Activated T-helper 1 cell treated with anti-CD3 and anti-CD28 coated beads, Interleukin-12 subunit alpha, Interleukin-12 subunit beta, Interleukin-2, Interleukin-4 antibody, amounts not matched to agents 30 ng/mL and 10 ng/mL and 1 ng/mL, durations not matched to agents 14 hours and 24 hours and 36 hours (primary cell): ENCODE measurements at regions of chr18 and their contacts with region 1.

Region 1: GRCh38 chr18:5237723-5238370 is 40.8 kb upstream of the AKAIN1 start:
- DNase-seq: peak; percentile 87
- H3K4me3 Mint-ChIP-seq: peak overlapping the region; percentile 97
- H3K27ac Mint-ChIP-seq: peak overlapping the region; percentile 98
- H3K4me1 Mint-ChIP-seq: peaks cover 47% of the 10 kb centered on the region
- H3K27me3 Mint-ChIP-seq: peaks cover 8% of the 10 kb centered on the region

Region 2: DNA sequence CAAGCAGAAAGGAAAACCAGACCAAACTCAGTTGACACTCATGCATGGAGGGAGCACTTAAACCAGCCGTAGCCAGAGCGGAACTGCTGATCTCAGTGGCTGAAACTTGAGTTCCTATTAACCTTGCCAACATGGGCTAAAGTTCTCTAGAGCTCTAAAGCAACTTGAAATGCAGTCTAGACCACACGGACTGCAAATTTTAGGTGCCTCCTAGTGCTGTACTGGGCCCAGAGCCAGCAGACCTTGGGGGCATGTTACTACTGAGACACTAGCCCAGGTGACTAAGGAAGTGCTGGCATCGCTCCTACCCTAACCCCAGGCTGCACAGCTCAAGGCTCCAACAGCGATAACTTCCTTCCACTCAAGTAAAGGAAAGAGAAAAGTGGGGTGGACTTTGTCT is 277.3 kb before region 1 on chr18:
- intact Hi-C with region 1: no loop called
- DNase-seq: no peak
- H3K4me3 Mint-ChIP-seq: no peak overlapping the region
- H3K27ac Mint-ChIP-seq: no peak overlapping the region
- H3K4me1 Mint-ChIP-seq: no peaks in the 10 kb centered on the region
- H3K27me3 Mint-ChIP-seq: no peaks in the 10 kb centered on the region

Region 3: DNA sequence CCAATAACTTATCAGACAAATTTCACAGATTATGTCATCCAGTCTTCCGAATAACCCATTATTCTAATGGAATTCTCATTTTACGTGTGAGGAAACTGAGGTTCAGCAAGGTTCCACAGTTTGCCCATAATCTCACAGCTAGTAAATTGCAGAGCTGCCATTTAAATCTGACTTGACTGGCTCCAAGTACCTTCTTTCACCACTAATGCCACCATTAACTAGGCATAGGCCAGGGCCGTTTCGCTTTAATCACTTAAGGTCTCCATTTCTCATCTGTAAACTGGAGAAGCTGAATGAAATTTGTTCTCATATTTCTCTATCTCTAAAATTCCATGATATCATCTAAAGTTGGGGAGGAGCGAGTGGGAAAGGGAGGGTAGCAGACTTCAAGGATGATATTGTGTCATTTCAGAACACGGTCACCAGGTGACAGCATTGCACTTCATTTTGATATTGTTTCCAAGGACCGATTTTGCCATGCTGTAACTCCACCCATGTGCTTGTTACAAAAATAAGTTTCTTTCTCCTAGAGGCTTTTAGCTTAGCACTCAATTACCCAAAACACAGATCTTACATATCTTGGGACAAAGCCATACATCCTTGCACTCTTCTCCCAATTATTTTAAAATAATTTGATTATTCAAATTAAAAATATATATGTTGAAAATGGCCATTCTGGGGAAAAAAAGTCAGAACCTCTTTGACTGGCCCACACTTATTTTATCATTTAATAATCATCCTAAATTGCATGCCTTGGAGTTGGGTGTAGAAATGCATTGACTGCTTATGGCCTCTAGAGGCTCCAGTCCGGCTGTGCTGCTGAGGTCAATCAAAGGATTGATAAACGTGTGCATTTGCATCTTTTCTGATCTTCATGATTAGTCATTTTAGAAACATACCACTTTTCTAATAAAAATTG is 164.6 kb before region 1 on chr18:
- intact Hi-C with region 1: loop called (anchors 5 kb)
- DNase-seq: no peak
- H3K4me3 Mint-ChIP-seq: no peak overlapping the region
- H3K27ac Mint-ChIP-seq: no peak overlapping the region
- H3K4me1 Mint-ChIP-seq: no peaks in the 10 kb centered on the region
- H3K27me3 Mint-ChIP-seq: peaks cover 13% of the 10 kb centered on the region

Region 4: GRCh38 chr18:5282770-5283169 is 44.9 kb after region 1 on chr18:
- intact Hi-C with region 1: loop called (anchors 1 kb)
- DNase-seq: no peak
- H3K4me3 Mint-ChIP-seq: no peak overlapping the region
- H3K27ac Mint-ChIP-seq: peak overlapping the region; percentile 55
- H3K4me1 Mint-ChIP-seq: peaks cover 14% of the 10 kb centered on the region
- H3K27me3 Mint-ChIP-seq: no peaks in the 10 kb centered on the region

Region 5: GRCh38 chr18:5295981-5296705 is 58.3 kb after region 1 on chr18:
- intact Hi-C with region 1: loop called (anchors 1 kb)
- DNase-seq: peak; percentile 91
- H3K4me3 Mint-ChIP-seq: peak overlapping the region; percentile 94
- H3K27ac Mint-ChIP-seq: peak overlapping the region; percentile 98
- H3K4me1 Mint-ChIP-seq: peaks cover 34% of the 10 kb centered on the region
- H3K27me3 Mint-ChIP-seq: peaks cover 16% of the 10 kb centered on the region

Region 6: GRCh38 chr18:5311301-5311989 is 73.6 kb after region 1 on chr18:
- intact Hi-C with region 1: no loop called
- DNase-seq: no peak
- H3K4me3 Mint-ChIP-seq: no peak overlapping the region
- H3K27ac Mint-ChIP-seq: no peak overlapping the region
- H3K4me1 Mint-ChIP-seq: peaks cover 10% of the 10 kb centered on the region
- H3K27me3 Mint-ChIP-seq: no peaks in the 10 kb centered on the region

Region 7: GRCh38 chr18:5456577-5457463 is 219.0 kb after region 1 on chr18:
- intact Hi-C with region 1: loop called (anchors 10 kb)
- DNase-seq: no peak
- H3K4me3 Mint-ChIP-seq: peak overlapping the region; percentile 55
- H3K27ac Mint-ChIP-seq: peak overlapping the region; percentile 70
- H3K4me1 Mint-ChIP-seq: peaks cover 6% of the 10 kb centered on the region
- H3K27me3 Mint-ChIP-seq: no peaks in the 10 kb centered on the region

Region 8: DNA sequence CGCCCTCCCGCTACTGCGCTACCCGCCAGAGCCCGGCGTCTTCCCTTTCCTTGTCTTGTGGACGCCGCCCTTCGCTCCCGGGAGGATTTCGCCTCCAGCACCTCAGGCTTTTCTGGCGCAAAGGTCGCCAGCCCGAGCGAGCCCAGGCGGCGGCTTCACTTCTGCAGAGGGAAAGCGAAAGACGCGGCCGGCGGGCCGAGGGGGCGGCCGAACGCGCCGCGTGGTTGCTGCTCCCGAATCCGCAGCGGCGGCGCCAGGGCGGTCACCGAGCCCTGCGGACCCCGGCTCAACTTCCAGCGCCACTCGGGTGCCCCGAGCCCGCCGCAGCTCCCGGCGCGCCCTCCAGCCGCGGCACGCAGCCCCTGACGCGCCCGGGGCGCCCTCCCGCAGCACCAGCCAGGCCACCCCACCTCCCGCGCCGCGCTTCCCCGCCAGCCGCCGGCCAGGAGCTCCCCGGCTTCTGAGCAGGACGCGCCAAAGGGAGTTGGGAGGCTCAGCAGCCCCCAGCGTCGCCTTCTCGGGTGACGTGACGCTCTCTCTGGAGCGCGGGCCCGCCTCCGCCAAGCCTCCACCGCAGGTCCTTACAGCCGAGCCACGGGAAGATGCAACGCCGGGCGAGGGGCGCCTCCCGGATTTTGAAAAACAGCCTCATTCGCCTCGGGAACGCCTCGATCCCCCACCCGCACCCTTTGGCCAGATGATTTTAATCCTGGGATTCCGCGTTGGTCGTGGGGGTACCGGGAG is 390.8 kb after region 1 on chr18:
- intact Hi-C with region 1: loop called (anchors 2 kb)
- DNase-seq: no peak
- H3K4me3 Mint-ChIP-seq: peak overlapping the region; percentile 78
- H3K27ac Mint-ChIP-seq: no peak overlapping the region
- H3K4me1 Mint-ChIP-seq: no peaks in the 10 kb centered on the region
- H3K27me3 Mint-ChIP-seq: peaks cover 24% of the 10 kb centered on the region